GM10248 (cell line): ENCODE measurements at regions of chr17 and their contacts with region 1.

Region 1: GRCh38 chr17:54992797-54993639 is 24.5 kb downstream of the STXBP4 start:
- DNase-seq: peak; percentile 44
- CTCF ChIP-seq: peak; percentile 53

Region 2: GRCh38 chr17:54956791-54957190 is 36.2 kb before region 1 on chr17:
- CTCF ChIA-PET with region 1: no interaction called
- POLR2A ChIA-PET with region 1: no interaction called
- DNase-seq: no peak
- CTCF ChIP-seq: no peak

Region 3: DNA sequence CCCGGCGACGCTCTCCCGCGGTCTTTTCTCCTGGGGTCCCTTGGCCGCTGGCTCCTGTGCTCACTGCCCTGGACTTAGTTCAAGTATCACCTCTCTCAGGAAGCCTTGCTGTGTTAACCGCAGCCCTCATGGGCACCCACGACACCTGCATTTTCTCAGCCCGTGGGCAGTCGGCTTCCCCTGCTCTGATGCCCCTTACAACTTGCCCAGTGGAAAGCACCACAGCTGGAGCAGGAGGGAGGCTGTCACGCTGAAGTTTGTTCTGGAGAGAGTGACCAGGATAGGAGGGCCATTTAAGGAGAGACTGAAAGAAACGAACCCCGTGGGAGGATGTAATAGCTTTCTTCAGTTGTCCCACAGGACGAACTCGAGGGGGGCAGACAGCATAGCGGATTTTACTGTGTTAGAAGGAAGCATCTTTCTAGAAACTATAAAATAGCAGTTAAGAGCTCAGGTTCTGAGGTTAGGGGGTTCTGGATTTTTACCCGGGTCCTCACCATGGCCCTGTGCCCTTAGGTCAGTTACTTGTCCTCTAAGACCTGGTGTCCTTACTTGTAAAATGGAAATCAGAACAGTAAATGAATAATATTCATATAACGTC is 23.9 kb before region 1 on chr17:
- CTCF ChIA-PET with region 1: interaction called, 12 read pairs
- POLR2A ChIA-PET with region 1: interaction called, 3 read pairs
- DNase-seq: no peak
- CTCF ChIP-seq: no peak

Region 4: GRCh38 chr17:55005520-55005919 is 12.5 kb after region 1 on chr17:
- CTCF ChIA-PET with region 1: interaction called, 109 read pairs
- POLR2A ChIA-PET with region 1: no interaction called
- DNase-seq: peak; percentile 15
- CTCF ChIP-seq: peak; percentile 21

Region 5: DNA sequence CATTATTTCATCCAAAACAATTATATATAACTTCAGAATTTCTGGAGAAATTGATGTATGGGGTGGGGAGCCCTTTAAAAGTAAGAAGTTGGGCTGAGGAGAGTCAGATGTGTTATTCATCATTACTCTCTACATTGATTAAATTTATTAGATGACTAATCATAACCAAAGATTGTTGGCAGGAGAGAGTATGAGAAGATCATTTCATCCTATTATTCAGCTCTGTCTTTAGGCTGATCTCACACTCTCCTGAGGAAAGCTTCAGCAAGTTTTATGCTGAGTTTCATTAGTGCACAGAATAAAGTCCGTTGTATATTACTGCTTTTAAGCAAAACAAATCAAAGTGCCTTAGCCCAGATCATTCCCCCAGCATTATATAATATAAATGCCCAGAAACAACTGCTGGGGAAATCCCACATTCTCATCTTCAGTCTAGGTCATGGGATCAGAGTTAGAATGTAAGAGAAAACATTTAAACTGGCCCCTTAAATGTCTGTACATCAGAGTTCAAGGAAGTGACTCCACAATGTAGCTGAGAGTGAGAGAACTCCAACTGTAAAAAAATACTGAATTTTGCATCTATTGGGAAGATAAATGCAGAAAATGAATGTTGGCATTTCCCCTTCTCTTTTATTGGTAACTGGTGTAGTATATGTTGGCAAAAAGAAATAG is 141.6 kb after region 1 on chr17:
- CTCF ChIA-PET with region 1: no interaction called
- POLR2A ChIA-PET with region 1: no interaction called
- DNase-seq: no peak
- CTCF ChIP-seq: no peak

Region 6: GRCh38 chr17:55284001-55284884 is 291.2 kb after region 1 on chr17:
- CTCF ChIA-PET with region 1: interaction called, 11 read pairs
- POLR2A ChIA-PET with region 1: no interaction called
- DNase-seq: no peak
- CTCF ChIP-seq: no peak

Region 7: GRCh38 chr17:55348749-55349354 is 355.8 kb after region 1 on chr17:
- CTCF ChIA-PET with region 1: interaction called, 70 read pairs
- POLR2A ChIA-PET with region 1: no interaction called
- DNase-seq: peak; percentile 37
- CTCF ChIP-seq: peak; percentile 77

Region 8: DNA sequence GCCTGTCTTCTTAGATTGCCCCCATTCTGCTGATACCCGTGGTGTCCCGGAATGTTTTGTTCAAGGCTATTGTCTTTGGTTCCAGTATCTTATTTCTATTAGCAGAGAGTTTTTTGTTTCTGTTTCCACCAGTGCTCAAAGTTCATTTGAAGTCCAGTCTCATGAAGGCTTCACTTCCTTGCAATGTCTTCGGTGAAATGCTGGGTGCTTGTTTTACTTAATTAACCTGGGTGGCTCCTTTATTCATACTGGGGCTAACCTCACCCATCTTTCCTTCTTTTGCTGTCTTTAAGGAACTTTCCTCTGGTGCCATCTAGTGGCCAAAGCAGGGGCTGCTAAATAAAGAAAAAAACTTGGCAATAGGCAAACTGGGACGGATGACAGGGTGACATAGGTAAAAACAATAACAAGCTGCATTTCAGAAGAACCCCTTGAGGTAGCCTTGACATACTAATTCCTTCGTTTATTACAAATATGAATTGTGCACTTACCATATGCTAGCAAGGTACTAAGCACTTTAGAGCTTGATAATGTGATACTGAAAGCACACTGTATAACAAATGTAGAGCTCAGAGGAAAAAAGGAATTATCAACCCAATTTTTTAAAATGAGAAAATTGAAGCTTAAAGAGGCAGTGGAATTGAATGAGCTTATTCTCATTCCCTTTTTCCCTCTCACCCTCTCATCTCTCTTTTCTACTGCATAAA is 521.0 kb after region 1 on chr17:
- CTCF ChIA-PET with region 1: interaction called, 13 read pairs
- POLR2A ChIA-PET with region 1: no interaction called
- DNase-seq: peak; percentile 58
- CTCF ChIP-seq: peak; percentile 90